ENCODE measurements at regions of chr14 and their contacts with region 1.

Region 1: GRCh38 chr14:55097881-55098560 is 31.0 kb upstream of the LGALS3 start:
- DNase-seq: no peak
- ATAC-seq: no peak

Region 2: GRCh38 chr14:55129428-55130195 is 31.6 kb after region 1 on chr14:
- intact Hi-C with region 1: loop called (anchors 5 kb)
- DNase-seq: peak; percentile 86
- ATAC-seq: peak; percentile 65

Region 3: GRCh38 chr14:55157080-55157479 is 59.1 kb after region 1 on chr14:
- intact Hi-C with region 1: loop called (anchors 5 kb)
- DNase-seq: no peak
- ATAC-seq: no peak